H1 (cell line): ENCODE measurements at regions of chr20 and their contacts with region 1.

Region 1: GRCh38 chr20:21125849-21126580 is at the start of gene KIZ:
- DNase-seq: peak; percentile 90 to 100
- H3K4me3 ChIP-seq: peak within 1 kb of the TSS; percentile 60 to 98 (median 78)
- H3K27ac ChIP-seq: 0 out of 2 replicates have a peak within 1 kb of the TSS, but pooled peaks have one; percentile 37
- H3K4me1 ChIP-seq: peaks cover 2 to 8% (median 7%) of the 10 kb centered on the region in 4 experiments; a peak in 5 of 7 replicates
- H3K27me3 ChIP-seq: no peaks in the 10 kb centered on the region
- CTCF ChIP-seq: peak; percentile 25 to 51 (median 46)
- EP300 ChIP-seq: no peak
- POLR2A ChIP-seq: peak in 1 of 2 experiments; percentile 79; a peak in 2 of 3 replicates
- RAD21 ChIP-seq: peak in 1 of 2 experiments; percentile 52; a peak in 2 of 4 replicates
- total RNA-seq, gene KIZ: 47.9 and 51.7 TPM in 2 replicates

Region 2: GRCh38 chr20:20926209-20926905 is 199.7 kb before region 1 on chr20:
- CTCF ChIA-PET with region 1: no interaction called
- POLR2A ChIA-PET with region 1: no interaction called
- DNase-seq: no peak
- H3K4me3 ChIP-seq: no peak overlapping the region
- H3K27ac ChIP-seq: no peak overlapping the region
- H3K4me1 ChIP-seq: peaks cover 0 to 2% (median under 1%) of the 10 kb centered on the region in 4 experiments; a peak in 2 of 7 replicates
- H3K27me3 ChIP-seq: no peaks in the 10 kb centered on the region
- CTCF ChIP-seq: no peak
- EP300 ChIP-seq: no peak
- POLR2A ChIP-seq: no peak
- RAD21 ChIP-seq: no peak

Region 3: DNA sequence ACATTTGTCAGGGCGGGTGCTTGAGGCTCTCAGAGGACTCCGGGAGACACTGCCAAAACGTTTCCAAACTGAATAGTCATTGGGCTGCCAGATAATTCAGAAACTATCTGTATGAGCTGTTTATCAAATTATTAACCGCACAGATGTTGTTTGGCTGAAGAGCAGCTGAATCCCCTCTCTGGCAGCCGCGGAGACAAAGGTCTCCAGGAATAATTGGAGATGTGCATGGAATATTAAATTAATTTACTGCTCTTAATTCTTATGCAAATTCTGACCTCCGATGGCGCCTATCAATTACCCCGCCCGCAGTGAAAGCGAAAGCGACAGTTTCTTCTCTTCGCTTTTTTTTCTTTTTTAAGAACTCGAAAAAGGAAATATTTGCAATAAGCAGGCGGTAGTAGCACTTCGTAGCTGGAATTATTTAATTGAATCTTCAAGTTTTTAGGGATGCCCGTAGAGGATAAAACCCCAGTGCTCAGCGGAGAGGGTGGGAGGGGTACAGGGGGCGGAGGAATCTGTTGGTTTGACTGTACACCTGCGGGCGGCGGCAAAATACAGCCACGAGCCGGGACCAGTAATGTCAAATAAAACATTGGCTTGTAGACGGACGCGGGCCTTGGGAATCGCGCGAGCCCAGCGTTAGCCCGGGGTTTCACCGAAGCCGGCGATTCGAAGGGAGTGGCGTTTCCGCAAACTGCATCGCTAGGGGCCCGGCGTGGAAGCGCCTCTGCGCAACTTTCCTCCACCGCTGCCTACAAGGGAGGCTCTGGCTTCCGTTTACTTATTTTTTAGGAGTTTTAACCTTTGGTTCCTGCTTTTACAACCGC is 26.1 kb before region 1 on chr20:
- CTCF ChIA-PET with region 1: interaction called, 6 read pairs
- POLR2A ChIA-PET with region 1: interaction called, 20 read pairs
- DNase-seq: peak in 1 of 2 experiments; percentile 68
- H3K4me3 ChIP-seq: peak overlapping the region; percentile 44 to 78 (median 64)
- H3K27ac ChIP-seq: no peak overlapping the region
- H3K4me1 ChIP-seq: peaks cover 10 to 23% (median 17%) of the 10 kb centered on the region in 4 experiments
- H3K27me3 ChIP-seq: peaks cover 26 to 84% (median 74%) of the 10 kb centered on the region in 4 experiments
- CTCF ChIP-seq: no peak
- EP300 ChIP-seq: no peak
- POLR2A ChIP-seq: no peak
- RAD21 ChIP-seq: no peak

Region 4: GRCh38 chr20:21166801-21167200 is 40.8 kb after region 1 on chr20:
- CTCF ChIA-PET with region 1: no interaction called
- POLR2A ChIA-PET with region 1: no interaction called
- DNase-seq: no peak
- H3K4me3 ChIP-seq: no peak overlapping the region
- H3K27ac ChIP-seq: no peak overlapping the region
- H3K4me1 ChIP-seq: no peaks in the 10 kb centered on the region
- H3K27me3 ChIP-seq: no peaks in the 10 kb centered on the region
- CTCF ChIP-seq: no peak
- EP300 ChIP-seq: no peak
- POLR2A ChIP-seq: no peak
- RAD21 ChIP-seq: no peak